ENCODE measurements at regions of chr10 and their contacts with region 1.

Region 1: GRCh38 chr10:75408911-75409885 is 7.6 kb upstream of the ZNF503 start:
- DNase-seq: peak; percentile 91
- ATAC-seq: peak; percentile 51
- H3K4me3 ChIP-seq: peak overlapping the region; percentile 74
- H3K27ac ChIP-seq: peak overlapping the region; percentile 73
- H3K4me1 ChIP-seq: peaks cover 30% of the 10 kb centered on the region
- H3K27me3 ChIP-seq: peaks cover 88% of the 10 kb centered on the region
- CTCF ChIP-seq: peak; percentile 41

Region 2: GRCh38 chr10:74255888-74256357 is 1153.3 kb before region 1 on chr10:
- CTCF ChIA-PET with region 1: no interaction called
- POLR2A ChIA-PET with region 1: interaction called, 23 read pairs
- intact Hi-C with region 1: no loop called
- DNase-seq: peak; percentile 79
- ATAC-seq: peak; percentile 68
- H3K4me3 ChIP-seq: no peak overlapping the region
- H3K27ac ChIP-seq: no peak overlapping the region
- H3K4me1 ChIP-seq: peaks cover 23% of the 10 kb centered on the region
- H3K27me3 ChIP-seq: no peaks in the 10 kb centered on the region
- CTCF ChIP-seq: no peak

Region 3: DNA sequence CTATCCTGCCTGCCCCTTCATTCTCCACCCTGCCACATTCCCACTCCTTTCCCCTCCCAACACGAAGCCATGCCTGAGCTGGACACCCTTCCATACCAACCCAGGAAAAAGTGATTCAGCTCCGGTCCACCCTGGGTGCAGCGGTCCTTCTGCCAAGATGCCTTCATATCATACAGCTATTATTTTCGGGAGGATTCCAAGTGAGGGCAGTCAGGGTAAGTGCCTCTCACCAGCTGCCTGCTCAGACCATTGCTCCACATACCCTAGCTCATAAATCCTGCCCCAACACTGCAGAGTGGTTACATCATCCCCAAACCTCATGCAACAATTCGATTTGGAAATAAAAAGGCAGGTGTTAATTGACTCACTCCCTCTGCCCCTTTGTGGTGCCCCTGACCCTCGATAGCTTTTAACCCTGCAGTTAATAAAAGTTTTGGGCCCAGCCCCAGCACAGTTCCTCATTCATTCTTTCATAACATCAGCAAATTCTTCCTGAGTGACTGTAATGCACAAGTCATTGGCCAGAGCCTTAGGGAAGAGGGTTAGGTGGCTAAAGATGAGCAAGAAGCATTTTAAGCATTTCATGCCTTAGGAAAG is 50.3 kb before region 1 on chr10:
- CTCF ChIA-PET with region 1: no interaction called
- POLR2A ChIA-PET with region 1: no interaction called
- intact Hi-C with region 1: no loop called
- DNase-seq: peak; percentile 100
- ATAC-seq: peak; percentile 79
- H3K4me3 ChIP-seq: no peak overlapping the region
- H3K27ac ChIP-seq: peak overlapping the region; percentile 19
- H3K4me1 ChIP-seq: peaks cover 21% of the 10 kb centered on the region
- H3K27me3 ChIP-seq: no peaks in the 10 kb centered on the region
- CTCF ChIP-seq: no peak

Region 4: DNA sequence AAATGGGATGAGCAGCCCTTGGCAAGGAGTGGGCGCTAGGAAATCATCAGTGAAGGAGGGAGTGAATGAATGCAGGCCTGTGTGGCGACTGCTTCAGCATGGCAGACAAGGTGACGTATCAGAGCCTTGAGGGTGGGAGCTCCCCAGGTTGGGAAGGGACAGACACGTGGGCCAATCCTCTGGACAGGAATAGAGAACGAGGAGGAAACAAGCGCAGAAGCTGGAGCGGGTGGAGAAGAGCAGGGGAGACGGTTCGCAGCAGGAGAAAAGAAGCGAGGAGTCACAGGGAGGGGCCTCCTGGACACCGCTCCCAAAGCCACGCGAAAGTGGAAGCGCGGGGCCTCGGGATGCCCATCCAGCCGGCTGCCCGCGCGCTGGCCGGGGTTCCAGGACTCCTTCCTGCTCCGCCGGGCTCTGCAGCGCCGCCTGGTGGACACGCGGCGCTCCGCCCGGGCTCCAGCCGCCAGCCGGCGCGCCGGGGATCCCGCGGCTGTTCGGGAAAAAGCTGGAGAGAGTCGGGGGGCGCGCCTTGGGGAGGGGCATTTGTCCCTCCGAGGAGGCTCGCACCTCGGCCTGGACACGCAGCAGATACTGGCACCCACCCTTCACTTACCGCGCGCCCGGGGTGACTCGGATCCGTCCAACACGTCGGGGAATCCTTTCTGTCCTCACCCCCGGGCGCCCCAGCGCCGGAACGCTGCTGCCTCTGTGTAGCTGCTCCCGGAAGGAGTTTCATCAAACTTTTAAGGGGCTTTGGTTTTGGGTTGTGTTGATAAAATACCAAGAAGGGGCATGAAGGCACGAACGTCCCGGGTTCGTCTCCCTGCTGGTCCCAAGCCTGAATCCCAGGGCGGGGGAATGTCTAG is 13.9 kb before region 1 on chr10:
- CTCF ChIA-PET with region 1: no interaction called
- POLR2A ChIA-PET with region 1: interaction called, 11 read pairs
- intact Hi-C with region 1: no loop called
- DNase-seq: peak; percentile 93
- ATAC-seq: peak; percentile 14
- H3K4me3 ChIP-seq: peak overlapping the region; percentile 79
- H3K27ac ChIP-seq: peak overlapping the region; percentile 45
- H3K4me1 ChIP-seq: peaks cover 6% of the 10 kb centered on the region; the same call in 1 of the 2 replicates
- H3K27me3 ChIP-seq: peaks cover 61% of the 10 kb centered on the region
- CTCF ChIP-seq: peak; percentile 100

Region 5: GRCh38 chr10:75508239-75508813 is 99.1 kb after region 1 on chr10:
- CTCF ChIA-PET with region 1: no interaction called
- POLR2A ChIA-PET with region 1: no interaction called
- intact Hi-C with region 1: loop called (anchors 2 kb)
- DNase-seq: peak; percentile 91
- ATAC-seq: peak; percentile 64
- H3K4me3 ChIP-seq: no peak overlapping the region
- H3K27ac ChIP-seq: peak overlapping the region; percentile 15
- H3K4me1 ChIP-seq: peaks cover 30% of the 10 kb centered on the region
- H3K27me3 ChIP-seq: peaks cover 19% of the 10 kb centered on the region; the same call in 1 of the 2 replicates
- CTCF ChIP-seq: no peak

Region 6: DNA sequence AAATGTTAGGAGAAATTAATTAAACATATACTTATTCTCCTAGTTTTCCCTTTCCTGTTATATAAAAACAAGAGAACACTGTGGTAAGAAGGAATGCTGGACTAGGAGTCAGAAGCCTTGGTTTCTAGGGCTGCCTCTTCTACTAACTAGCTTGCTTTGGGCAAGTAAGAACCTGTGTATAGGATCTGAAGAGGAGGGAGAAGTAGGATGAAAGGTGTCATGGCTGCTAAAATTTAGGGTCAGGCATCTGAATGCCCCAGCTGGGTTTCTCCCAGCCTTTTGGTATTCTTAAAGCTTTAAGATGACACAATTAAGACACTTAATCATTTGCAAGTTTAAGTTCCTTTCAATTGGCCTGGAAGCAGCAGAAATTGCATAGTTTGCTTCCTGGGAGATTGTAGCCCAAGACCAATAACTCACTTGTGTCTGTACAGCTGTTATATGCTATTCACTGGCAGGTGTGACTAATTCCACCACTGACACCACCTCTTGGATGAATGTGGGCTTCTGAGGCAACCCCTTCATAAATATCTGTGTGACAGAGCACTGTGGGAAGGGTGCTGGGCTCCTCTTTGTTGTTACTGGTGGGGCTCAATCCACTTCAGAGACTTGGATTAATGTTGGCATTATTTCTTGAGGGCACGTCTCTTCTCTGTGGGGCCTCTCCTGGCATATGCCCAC is 159.4 kb after region 1 on chr10:
- CTCF ChIA-PET with region 1: no interaction called
- POLR2A ChIA-PET with region 1: no interaction called
- intact Hi-C with region 1: no loop called
- DNase-seq: no peak
- ATAC-seq: peak; percentile 21; the same call in 1 of the 2 replicates
- H3K4me3 ChIP-seq: no peak overlapping the region
- H3K27ac ChIP-seq: no peak overlapping the region
- H3K4me1 ChIP-seq: no peaks in the 10 kb centered on the region
- H3K27me3 ChIP-seq: no peaks in the 10 kb centered on the region
- CTCF ChIP-seq: no peak

Region 7: GRCh38 chr10:75599875-75600648 is 190.9 kb after region 1 on chr10:
- CTCF ChIA-PET with region 1: no interaction called
- POLR2A ChIA-PET with region 1: no interaction called
- intact Hi-C with region 1: no loop called
- DNase-seq: no peak
- ATAC-seq: no peak
- H3K4me3 ChIP-seq: no peak overlapping the region
- H3K27ac ChIP-seq: no peak overlapping the region
- H3K4me1 ChIP-seq: no peaks in the 10 kb centered on the region
- H3K27me3 ChIP-seq: peaks cover 67% of the 10 kb centered on the region
- CTCF ChIP-seq: no peak

Region 8: GRCh38 chr10:75651417-75651816 is 242.2 kb after region 1 on chr10:
- CTCF ChIA-PET with region 1: interaction called, 4 read pairs
- POLR2A ChIA-PET with region 1: no interaction called
- intact Hi-C with region 1: loop called (anchors 1 kb)
- DNase-seq: peak; percentile 64
- ATAC-seq: no peak
- H3K4me3 ChIP-seq: no peak overlapping the region
- H3K27ac ChIP-seq: no peak overlapping the region
- H3K4me1 ChIP-seq: peaks cover 48% of the 10 kb centered on the region
- H3K27me3 ChIP-seq: peaks cover 9% of the 10 kb centered on the region; the same call in 1 of the 2 replicates
- CTCF ChIP-seq: peak; percentile 71

Region 9: DNA sequence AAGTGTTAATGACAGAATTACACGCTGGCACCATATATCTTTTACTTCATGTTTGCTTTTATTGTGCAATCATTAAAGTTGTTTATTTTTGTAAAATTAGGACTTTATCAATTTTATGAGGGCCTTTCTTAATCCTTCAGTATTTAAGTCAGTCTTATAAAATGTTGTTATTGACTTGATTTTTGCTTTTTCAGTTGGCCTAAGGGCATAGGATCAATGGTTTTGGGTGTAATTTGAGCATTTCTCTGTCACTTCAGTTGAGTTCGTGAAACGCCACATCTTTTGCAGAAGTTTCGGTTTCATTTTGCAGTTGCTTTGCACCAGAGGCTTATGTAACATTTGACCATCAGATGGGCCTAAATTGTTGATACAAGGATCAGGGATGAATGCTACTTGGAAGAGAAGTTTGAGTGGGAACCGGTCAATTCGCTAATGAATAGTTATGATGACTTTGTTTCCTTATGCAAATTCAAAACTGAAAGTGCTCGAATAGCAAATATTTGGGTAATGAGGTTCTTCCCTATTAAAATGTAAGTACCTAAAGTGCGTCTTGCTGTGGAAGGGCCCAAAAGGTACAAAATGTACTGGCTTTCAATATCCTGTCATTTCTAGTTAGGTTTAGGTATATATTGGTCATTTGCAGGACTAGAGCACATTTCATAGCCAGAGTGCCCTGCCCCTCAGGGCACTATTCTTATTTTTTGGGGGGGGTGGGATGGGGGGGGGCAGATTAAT is 363.1 kb after region 1 on chr10:
- CTCF ChIA-PET with region 1: no interaction called
- POLR2A ChIA-PET with region 1: no interaction called
- intact Hi-C with region 1: loop called (anchors 1 kb)
- DNase-seq: peak; percentile 68
- ATAC-seq: no peak
- H3K4me3 ChIP-seq: peak overlapping the region; percentile 52
- H3K27ac ChIP-seq: peak overlapping the region; percentile 76
- H3K4me1 ChIP-seq: peaks cover 48% of the 10 kb centered on the region
- H3K27me3 ChIP-seq: peaks cover 17% of the 10 kb centered on the region; the same call in 1 of the 2 replicates
- CTCF ChIP-seq: no peak

Measured in PC-3 (cell line).